Activated B cell treated with CpG ODN at 0.5 μM for 24 hours (primary cell): ENCODE measurements at regions of chr18 and their contacts with region 1.

Region 1: DNA sequence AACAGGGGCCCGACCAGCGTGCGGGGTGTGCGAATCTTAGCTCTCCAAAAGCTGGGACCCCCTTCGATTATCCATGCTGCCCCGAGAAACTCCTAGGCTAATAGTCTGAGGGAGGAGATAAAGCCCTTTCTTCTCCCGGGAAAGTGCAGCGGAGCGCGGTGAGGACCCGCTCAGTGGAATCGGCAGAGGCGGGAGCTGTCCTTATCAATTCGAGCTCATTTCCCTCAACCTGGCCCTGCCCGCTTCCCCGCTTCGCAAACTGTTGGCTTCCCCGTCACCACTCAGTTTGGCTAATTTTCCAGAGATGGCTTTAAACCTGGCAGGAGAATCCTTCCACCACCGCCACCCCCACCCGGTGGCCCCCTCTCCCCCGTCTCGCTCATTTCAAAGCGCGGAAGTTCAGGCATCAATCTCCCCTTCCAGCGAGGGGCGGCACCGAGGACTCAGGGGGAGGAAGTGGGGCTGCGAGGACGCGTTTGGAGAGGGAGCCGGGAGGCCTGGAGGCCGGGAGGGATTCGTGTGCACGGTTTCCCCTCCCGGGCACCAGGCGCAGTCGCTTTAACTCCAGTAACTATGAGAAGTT is 1.6 kb downstream of the KLHL14 start:
- DNase-seq: peak; percentile 46
- ATAC-seq: peak; percentile 22
- H3K4me3 Mint-ChIP-seq: peak overlapping the region; percentile 96
- H3K27ac Mint-ChIP-seq: peak overlapping the region; percentile 86
- H3K4me1 Mint-ChIP-seq: peaks cover 60% of the 10 kb centered on the region
- H3K27me3 Mint-ChIP-seq: no peaks in the 10 kb centered on the region
- CTCF ChIP-seq: no peak

Region 2: GRCh38 chr18:32092422-32093101 is 678.7 kb before region 1 on chr18:
- CTCF ChIA-PET with region 1: no interaction called
- POLR2A ChIA-PET with region 1: interaction called, 3 read pairs
- intact Hi-C with region 1: loop called (anchors 5 kb)
- DNase-seq: peak; percentile 100
- ATAC-seq: peak; percentile 90
- H3K4me3 Mint-ChIP-seq: peak overlapping the region; percentile 98
- H3K27ac Mint-ChIP-seq: peak overlapping the region; percentile 96
- H3K4me1 Mint-ChIP-seq: peaks cover 44% of the 10 kb centered on the region
- H3K27me3 Mint-ChIP-seq: no peaks in the 10 kb centered on the region
- CTCF ChIP-seq: no peak

Region 3: DNA sequence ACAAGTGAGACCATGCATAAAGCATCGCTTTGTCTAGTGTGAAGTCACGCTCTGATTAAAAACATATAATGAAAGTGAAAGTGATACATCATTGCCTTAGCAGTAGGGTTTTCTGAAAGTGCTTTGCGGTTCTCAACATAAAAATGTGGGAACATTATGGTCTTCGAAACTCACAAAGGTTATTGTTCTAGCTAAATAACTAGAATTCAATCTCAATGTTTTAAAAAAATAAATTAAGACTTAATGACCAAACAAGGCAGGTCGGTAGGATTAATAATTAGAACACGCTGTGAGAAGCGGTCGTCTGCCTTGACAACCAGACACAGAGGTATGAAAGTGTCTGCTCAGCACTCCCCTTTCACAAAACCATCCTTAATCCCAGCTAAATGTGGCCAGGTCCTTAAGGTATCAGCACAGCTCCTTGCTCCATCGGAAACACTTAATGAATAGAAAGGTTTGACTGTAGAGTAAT is 40.6 kb before region 1 on chr18:
- CTCF ChIA-PET with region 1: no interaction called
- POLR2A ChIA-PET with region 1: interaction called, 13 read pairs
- intact Hi-C with region 1: loop called (anchors 1 kb)
- DNase-seq: no peak
- ATAC-seq: peak; percentile 88
- H3K4me3 Mint-ChIP-seq: peak overlapping the region; percentile 72
- H3K27ac Mint-ChIP-seq: peak overlapping the region; percentile 86
- H3K4me1 Mint-ChIP-seq: peaks cover 50% of the 10 kb centered on the region
- H3K27me3 Mint-ChIP-seq: no peaks in the 10 kb centered on the region
- CTCF ChIP-seq: no peak

Region 4: DNA sequence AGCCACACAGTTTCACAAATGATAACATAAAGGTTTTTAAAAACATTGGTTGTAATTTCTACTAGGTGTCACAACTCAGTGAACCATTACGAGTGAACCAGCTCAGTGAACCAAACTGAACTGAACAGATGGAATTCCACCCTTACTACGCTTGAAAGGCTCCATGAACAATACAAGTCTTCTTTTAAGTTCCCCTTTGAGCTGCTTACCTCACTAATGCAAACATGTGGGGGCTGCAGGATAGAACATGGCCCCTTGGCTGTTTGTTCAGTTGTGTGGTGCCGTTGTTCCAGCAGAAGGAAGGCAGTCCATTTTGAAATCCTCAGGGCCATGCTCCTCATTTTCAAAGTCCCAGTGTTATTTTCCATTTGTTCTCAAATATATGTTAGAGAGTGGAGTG is 32.3 kb after region 1 on chr18:
- CTCF ChIA-PET with region 1: interaction called, 5 read pairs
- POLR2A ChIA-PET with region 1: interaction called, 105 read pairs
- intact Hi-C with region 1: loop called (anchors 1 kb)
- DNase-seq: no peak
- ATAC-seq: peak; percentile 88
- H3K4me3 Mint-ChIP-seq: peak overlapping the region; percentile 75
- H3K27ac Mint-ChIP-seq: peak overlapping the region; percentile 98
- H3K4me1 Mint-ChIP-seq: peaks cover 53% of the 10 kb centered on the region
- H3K27me3 Mint-ChIP-seq: no peaks in the 10 kb centered on the region
- CTCF ChIP-seq: no peak

Region 5: DNA sequence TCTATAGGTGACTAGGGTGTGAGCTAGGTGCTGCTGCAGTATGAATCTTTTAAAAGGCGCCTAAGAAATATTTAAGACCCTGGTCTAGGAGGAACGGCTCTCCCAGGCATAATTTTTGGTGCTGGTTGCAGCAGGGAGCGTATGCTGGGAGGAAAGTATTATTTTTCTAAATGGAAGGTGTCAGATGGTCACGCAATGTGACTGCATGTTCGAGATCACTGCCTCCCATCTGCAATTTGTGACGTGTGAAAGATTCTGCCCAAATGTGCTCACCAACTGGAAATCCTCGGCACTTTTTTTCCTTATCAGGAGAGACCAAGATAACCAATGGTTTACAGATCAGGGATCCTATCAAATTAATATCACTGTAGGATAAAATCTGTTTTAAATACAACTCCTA is 97.1 kb after region 1 on chr18:
- CTCF ChIA-PET with region 1: interaction called, 5 read pairs
- POLR2A ChIA-PET with region 1: interaction called, 87 read pairs
- intact Hi-C with region 1: loop called (anchors 2 kb)
- DNase-seq: no peak
- ATAC-seq: peak; percentile 62
- H3K4me3 Mint-ChIP-seq: peak overlapping the region; percentile 72
- H3K27ac Mint-ChIP-seq: peak overlapping the region; percentile 95
- H3K4me1 Mint-ChIP-seq: peaks cover 90% of the 10 kb centered on the region
- H3K27me3 Mint-ChIP-seq: no peaks in the 10 kb centered on the region
- CTCF ChIP-seq: no peak

Region 6: GRCh38 chr18:32884543-32884942 is 113.3 kb after region 1 on chr18:
- CTCF ChIA-PET with region 1: interaction called, 3 read pairs
- POLR2A ChIA-PET with region 1: interaction called, 43 read pairs
- intact Hi-C with region 1: loop called (anchors 1 kb)
- DNase-seq: peak; percentile 51
- ATAC-seq: peak; percentile 99
- H3K4me3 Mint-ChIP-seq: peak overlapping the region; percentile 53
- H3K27ac Mint-ChIP-seq: peak overlapping the region; percentile 89
- H3K4me1 Mint-ChIP-seq: peaks cover 86% of the 10 kb centered on the region
- H3K27me3 Mint-ChIP-seq: no peaks in the 10 kb centered on the region
- CTCF ChIP-seq: no peak

Region 7: GRCh38 chr18:32911660-32912284 is 140.5 kb after region 1 on chr18:
- CTCF ChIA-PET with region 1: interaction called, 3 read pairs
- POLR2A ChIA-PET with region 1: interaction called, 21 read pairs
- intact Hi-C with region 1: no loop called
- DNase-seq: no peak
- ATAC-seq: no peak
- H3K4me3 Mint-ChIP-seq: no peak overlapping the region
- H3K27ac Mint-ChIP-seq: no peak overlapping the region
- H3K4me1 Mint-ChIP-seq: peaks cover 56% of the 10 kb centered on the region
- H3K27me3 Mint-ChIP-seq: no peaks in the 10 kb centered on the region
- CTCF ChIP-seq: no peak